Body of pancreas (tissue), 4 donors: ENCODE measurements at regions of chr6 and their contacts with region 1.

Region 1: DNA sequence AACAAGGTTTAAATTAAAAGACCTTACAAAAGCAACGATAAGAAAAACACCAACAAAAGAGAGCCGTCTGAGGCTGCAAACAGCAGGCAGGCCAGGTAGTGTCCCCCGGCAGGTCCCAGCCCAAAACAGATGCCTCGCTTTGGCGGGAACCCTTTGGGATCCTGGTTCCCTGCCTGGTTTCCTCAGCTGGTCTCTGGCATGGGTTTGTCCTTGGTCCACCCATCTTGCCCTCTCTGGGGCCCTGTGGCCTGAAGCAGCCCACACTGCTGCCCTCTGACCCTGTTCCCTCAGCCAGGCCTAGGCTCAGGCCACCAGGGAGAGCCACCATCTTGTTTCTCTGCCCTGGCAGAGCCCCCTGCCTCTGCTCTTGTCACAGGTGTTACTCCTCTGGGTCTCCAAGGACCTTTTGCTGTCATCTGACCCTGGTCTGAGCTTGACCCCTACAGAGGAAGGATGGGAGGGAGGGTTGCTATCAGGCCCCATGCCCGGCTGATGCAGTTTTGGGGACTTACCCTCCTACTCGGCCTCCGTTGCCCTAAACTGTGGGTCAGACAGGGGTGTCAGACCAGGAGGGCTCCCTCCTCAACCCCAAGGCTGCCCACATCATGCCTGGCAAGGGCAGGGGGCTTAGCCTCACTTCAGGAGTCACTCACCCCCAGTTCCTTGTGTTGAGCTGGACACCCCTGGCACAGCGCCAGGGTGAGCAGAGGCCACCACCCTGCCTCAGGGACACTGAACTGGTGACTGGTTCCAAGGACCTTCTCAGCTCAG is 30.6 kb upstream of the GRM4 start:
- DNase-seq: no peak
- ATAC-seq: no peak
- H3K4me3 ChIP-seq: no peak overlapping the region
- H3K27ac ChIP-seq: no peak overlapping the region
- H3K4me1 ChIP-seq: no peaks in the 10 kb centered on the region
- H3K27me3 ChIP-seq: no peaks in the 10 kb centered on the region
- CTCF ChIP-seq: no peak
- POLR2A ChIP-seq: no peak

Region 2: DNA sequence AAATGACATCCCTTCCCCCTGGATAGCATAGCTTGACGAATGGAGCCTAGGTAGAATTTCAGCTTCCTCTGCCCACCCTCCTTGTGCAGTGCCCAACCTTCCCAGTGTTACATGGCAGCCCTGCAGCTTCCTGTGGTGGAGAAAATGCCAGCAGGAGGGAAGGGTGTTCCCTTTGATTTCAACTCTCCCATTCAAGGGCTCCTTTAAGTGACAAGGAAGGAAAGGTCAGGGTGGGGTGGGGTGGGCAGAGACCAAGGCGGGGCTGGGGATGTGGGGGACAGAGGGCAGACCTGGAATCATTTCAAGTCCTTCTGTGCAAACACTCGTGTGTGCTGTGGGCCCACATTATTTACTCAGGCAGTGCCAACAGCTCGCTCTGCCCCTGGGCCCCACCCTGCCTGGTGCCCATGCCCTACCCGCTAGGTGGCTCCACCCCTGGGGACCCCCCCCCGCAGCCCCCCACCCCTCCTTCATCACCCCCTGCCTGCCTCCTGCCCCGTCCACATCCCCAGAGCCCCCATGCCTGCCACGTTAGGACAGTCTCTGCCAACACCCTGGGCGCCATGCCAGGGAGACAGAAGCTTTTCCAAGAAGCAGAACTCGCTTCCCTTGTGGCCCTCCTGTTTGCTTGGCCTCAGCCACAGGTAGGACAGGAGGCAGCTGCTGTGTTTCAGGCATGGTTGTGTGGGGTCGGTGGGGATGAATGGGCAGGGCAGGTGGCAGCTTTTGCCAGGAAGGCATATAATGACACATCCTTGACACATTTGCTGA is 370.3 kb after region 1 on chr6:
- intact Hi-C with region 1: no loop called
- DNase-seq: peak; percentile 67 to 84 (median 74)
- ATAC-seq: peak; percentile 52
- H3K4me3 ChIP-seq: no peak overlapping the region
- H3K27ac ChIP-seq: peak overlapping the region in 1 of 4 donors; percentile 12
- H3K4me1 ChIP-seq: peaks cover 12% of the 10 kb centered on the region
- H3K27me3 ChIP-seq: no peaks in the 10 kb centered on the region
- CTCF ChIP-seq: no peak
- POLR2A ChIP-seq: no peak

Region 3: GRCh38 chr6:34595332-34596184 is 419.1 kb after region 1 on chr6:
- intact Hi-C with region 1: loop called (anchors 10 kb)
- DNase-seq: no peak
- ATAC-seq: no peak
- H3K4me3 ChIP-seq: no peak overlapping the region
- H3K27ac ChIP-seq: no peak overlapping the region
- H3K4me1 ChIP-seq: peaks cover 39% of the 10 kb centered on the region
- H3K27me3 ChIP-seq: no peaks in the 10 kb centered on the region
- CTCF ChIP-seq: no peak
- POLR2A ChIP-seq: no peak